Caco-2 (cell line): ENCODE measurements at regions of chr20 and their contacts with region 1.

Region 1: DNA sequence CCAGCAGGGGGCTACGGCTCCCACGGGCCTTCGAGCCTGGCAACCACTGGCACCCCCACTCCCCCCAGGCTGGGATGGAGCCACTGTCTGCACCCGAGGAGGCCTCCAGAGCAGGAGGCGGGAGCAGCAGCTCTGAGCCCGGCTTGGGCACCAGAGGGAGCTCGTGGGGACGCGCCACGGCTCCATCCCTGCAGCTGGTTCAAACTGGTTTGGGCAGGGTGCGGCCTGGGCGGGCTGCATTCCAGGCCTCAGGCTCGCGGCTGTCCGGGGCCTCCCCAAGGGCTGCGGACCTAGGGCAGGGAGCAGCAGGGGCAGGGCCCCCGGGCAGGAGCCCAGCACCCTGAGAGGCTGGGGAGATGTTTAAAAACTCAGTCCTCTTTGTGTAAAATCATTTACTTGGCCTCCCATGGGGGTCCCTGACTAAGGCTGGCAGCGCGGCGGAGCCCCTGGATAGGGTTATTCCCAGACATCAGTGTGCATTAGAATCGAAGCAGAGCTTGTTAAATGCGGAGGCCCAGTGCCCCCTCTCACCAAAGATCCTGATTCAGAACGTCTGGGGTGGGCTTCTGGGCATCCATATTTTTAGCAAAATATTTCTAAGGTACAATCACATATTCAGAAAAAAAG is 4.1 kb upstream of the BCAS4 start:
- DNase-seq: peak; percentile 100
- H3K4me3 ChIP-seq: no peak overlapping the region
- H3K4me3 Mint-ChIP-seq: peak overlapping the region; percentile 74
- H3K27ac Mint-ChIP-seq: peak overlapping the region; percentile 99
- H3K4me1 ChIP-seq: peaks cover 47% of the 10 kb centered on the region
- H3K4me1 Mint-ChIP-seq: peaks cover 62% of the 10 kb centered on the region
- H3K27me3 ChIP-seq: no peaks in the 10 kb centered on the region
- H3K27me3 Mint-ChIP-seq: no peaks in the 10 kb centered on the region
- CTCF ChIP-seq: peak; percentile 97 to 100

Region 2: DNA sequence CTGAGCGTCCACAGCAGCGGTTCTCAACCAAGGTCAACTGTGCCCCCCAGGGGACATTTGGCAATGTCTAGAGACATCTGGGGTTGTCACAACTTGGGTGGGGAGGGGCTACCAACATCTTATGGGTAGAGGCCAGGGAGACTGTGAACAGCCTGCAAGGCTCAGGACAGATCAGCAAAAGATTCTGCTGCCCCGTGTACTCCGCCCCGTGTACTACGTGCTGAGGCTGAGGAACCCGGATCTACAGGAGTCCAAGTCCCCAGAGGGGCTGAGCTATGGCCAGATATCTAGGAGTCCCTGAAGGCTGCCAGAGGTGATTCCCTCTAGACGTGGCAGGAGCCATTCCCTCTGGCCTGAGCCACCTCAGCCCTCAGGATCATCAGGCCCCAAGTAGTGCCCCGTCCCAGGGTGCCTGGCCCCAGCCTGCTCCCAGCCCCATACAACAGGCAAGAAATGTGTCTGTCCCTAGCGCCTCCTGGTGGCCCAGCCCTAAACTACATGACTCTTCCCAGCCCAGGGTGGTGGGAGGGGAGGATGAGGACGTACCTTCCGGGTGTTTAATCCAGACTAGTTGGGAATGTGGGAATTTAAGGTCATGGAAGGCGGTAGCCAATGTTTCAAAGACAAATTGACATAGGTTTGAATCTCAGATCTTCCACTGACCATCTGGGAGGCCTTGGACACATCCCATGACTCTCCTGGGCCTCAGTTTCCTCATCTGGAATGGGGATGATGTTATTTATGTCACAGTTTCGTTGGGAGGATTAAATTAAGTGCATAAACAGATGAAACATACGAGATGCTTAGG is 330.1 kb before region 1 on chr20:
- CTCF ChIA-PET with region 1: interaction called, 3 read pairs
- POLR2A ChIA-PET with region 1: no interaction called
- intact Hi-C with region 1: loop called (anchors 10 kb)
- DNase-seq: peak; percentile 93 to 96
- H3K4me3 ChIP-seq: no peak overlapping the region
- H3K4me3 Mint-ChIP-seq: no peak overlapping the region
- H3K27ac Mint-ChIP-seq: peak overlapping the region; percentile 34
- H3K4me1 ChIP-seq: peaks cover 33% of the 10 kb centered on the region
- H3K4me1 Mint-ChIP-seq: peaks cover 31% of the 10 kb centered on the region
- H3K27me3 ChIP-seq: no peaks in the 10 kb centered on the region
- H3K27me3 Mint-ChIP-seq: no peaks in the 10 kb centered on the region
- CTCF ChIP-seq: peak; percentile 99 to 100

Region 3: GRCh38 chr20:50663095-50663850 is 127.5 kb before region 1 on chr20:
- CTCF ChIA-PET with region 1: interaction called, 75 read pairs
- POLR2A ChIA-PET with region 1: interaction called, 9 read pairs
- intact Hi-C with region 1: loop called (anchors 1 kb)
- DNase-seq: peak; percentile 82 to 88
- H3K4me3 ChIP-seq: no peak overlapping the region
- H3K4me3 Mint-ChIP-seq: no peak overlapping the region
- H3K27ac Mint-ChIP-seq: peak overlapping the region; percentile 87
- H3K4me1 ChIP-seq: peaks cover 88% of the 10 kb centered on the region
- H3K4me1 Mint-ChIP-seq: peaks cover 84% of the 10 kb centered on the region
- H3K27me3 ChIP-seq: no peaks in the 10 kb centered on the region
- H3K27me3 Mint-ChIP-seq: no peaks in the 10 kb centered on the region
- CTCF ChIP-seq: peak; percentile 82 to 93

Region 4: DNA sequence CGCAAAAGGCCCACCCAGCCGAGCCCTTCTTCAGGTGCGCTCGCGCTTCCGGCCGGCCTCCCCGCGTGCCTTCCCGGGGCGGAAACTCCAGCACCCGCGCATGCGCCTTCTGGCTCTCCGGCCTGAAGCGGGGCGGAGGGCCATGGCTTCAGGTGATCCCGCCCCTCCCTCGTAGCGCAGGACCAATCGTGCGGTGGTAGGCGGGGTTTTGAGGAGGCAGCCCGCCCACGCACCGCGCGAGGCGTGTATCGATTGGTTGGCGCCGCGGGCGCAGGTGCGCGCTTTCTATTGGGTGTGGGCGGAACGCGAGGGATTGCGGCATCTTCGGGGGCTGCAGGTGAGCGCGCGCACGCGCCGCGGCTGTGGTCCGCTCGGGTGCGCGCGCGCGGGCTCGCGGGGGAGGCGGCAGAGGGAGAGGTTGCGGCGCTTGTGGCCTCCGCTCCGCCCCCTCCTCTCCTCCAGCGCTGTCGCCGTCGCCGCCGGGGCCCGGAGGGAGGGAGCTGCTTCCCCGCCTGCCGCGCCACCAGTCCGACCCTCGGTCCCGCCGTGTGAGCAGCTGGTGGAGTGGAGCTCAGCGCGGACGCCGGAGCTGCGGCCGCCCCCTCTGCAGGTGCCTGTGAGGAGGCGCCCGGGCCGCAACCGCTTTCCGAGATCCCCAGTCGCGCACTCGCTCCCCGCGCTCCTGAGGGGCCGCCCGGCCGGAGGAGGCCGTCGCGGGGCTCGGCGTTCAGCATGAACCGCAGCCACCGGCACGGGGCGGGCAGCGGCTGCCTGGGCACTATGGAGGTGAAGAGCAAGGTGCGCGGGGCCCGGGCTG is 59.5 kb before region 1 on chr20 and contains the start of gene PARD6B:
- CTCF ChIA-PET with region 1: interaction called, 17 read pairs
- POLR2A ChIA-PET with region 1: interaction called, 4 read pairs
- intact Hi-C with region 1: no loop called
- DNase-seq: peak; percentile 100
- H3K4me3 ChIP-seq: peak within 1 kb of the TSS; percentile 78
- H3K4me3 Mint-ChIP-seq: peak within 1 kb of the TSS; percentile 88
- H3K27ac Mint-ChIP-seq: peak within 1 kb of the TSS; percentile 96
- H3K4me1 ChIP-seq: peaks cover 67% of the 10 kb centered on the region
- H3K4me1 Mint-ChIP-seq: peaks cover 46% of the 10 kb centered on the region
- H3K27me3 ChIP-seq: no peaks in the 10 kb centered on the region
- H3K27me3 Mint-ChIP-seq: no peaks in the 10 kb centered on the region
- CTCF ChIP-seq: peak in 1 of 2 experiments; percentile 19
- total RNA-seq, gene PARD6B: 153 and 156 TPM in 2 replicates

Region 5: GRCh38 chr20:50856036-50856756 is 65.4 kb after region 1 on chr20:
- CTCF ChIA-PET with region 1: interaction called, 10 read pairs
- POLR2A ChIA-PET with region 1: interaction called, 4 read pairs
- intact Hi-C with region 1: loop called (anchors 5 kb)
- DNase-seq: peak; percentile 74 to 83
- H3K4me3 ChIP-seq: no peak overlapping the region
- H3K4me3 Mint-ChIP-seq: peak overlapping the region; percentile 0
- H3K27ac Mint-ChIP-seq: peak overlapping the region; percentile 39
- H3K4me1 ChIP-seq: peaks cover 17% of the 10 kb centered on the region
- H3K4me1 Mint-ChIP-seq: peaks cover 18% of the 10 kb centered on the region
- H3K27me3 ChIP-seq: no peaks in the 10 kb centered on the region
- H3K27me3 Mint-ChIP-seq: no peaks in the 10 kb centered on the region
- CTCF ChIP-seq: no peak

Region 6: GRCh38 chr20:50987592-50988210 is 196.9 kb after region 1 on chr20:
- CTCF ChIA-PET with region 1: interaction called, 16 read pairs
- POLR2A ChIA-PET with region 1: no interaction called
- intact Hi-C with region 1: no loop called
- DNase-seq: peak; percentile 91 to 96
- H3K4me3 ChIP-seq: no peak overlapping the region
- H3K4me3 Mint-ChIP-seq: no peak overlapping the region
- H3K27ac Mint-ChIP-seq: no peak overlapping the region
- H3K4me1 ChIP-seq: no peaks in the 10 kb centered on the region
- H3K4me1 Mint-ChIP-seq: peaks cover 14% of the 10 kb centered on the region
- H3K27me3 ChIP-seq: no peaks in the 10 kb centered on the region
- H3K27me3 Mint-ChIP-seq: peaks cover 9% of the 10 kb centered on the region
- CTCF ChIP-seq: peak; percentile 97 to 99